ENCODE measurements at regions of chr2 and their contacts with region 1.

Region 1: GRCh38 chr2:140639628-140640027 is 1491.2 kb downstream of the LRP1B start:
- DNase-seq: no peak
- H3K4me3 ChIP-seq: no peak overlapping the region
- CTCF ChIP-seq: no peak
- POLR2A ChIP-seq: no peak

Region 2: GRCh38 chr2:139177041-139177440 is 1462.6 kb before region 1 on chr2:
- intact Hi-C with region 1: loop called (anchors 10 kb)
- DNase-seq: no peak
- H3K4me3 ChIP-seq: no peak overlapping the region
- CTCF ChIP-seq: no peak
- POLR2A ChIP-seq: no peak

Region 3: DNA sequence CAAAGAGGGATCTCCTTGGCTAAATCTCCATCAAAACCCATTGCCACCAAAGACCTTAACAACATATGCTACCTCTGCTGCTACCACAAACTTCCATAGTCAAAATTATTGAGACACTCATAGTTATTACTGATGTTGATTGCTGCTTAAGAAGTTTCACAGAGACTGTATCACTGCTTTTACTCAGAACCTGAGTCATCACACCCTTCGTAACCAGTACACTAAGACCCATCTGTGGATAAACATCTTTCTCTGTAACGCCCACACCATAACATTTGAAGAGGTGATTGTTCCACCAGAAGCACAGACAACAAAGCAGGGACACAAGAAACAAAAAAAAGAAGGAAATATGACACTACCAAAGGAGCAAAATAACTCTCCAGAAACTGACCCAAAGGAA is 71.9 kb before region 1 on chr2:
- intact Hi-C with region 1: no loop called
- DNase-seq: no peak
- H3K4me3 ChIP-seq: no peak overlapping the region
- CTCF ChIP-seq: no peak
- POLR2A ChIP-seq: no peak

Measured in lower leg skin (tissue), 4 donors.